Dorsolateral prefrontal cortex (tissue), 120 donors: ENCODE measurements at regions of chr17 and their contacts with region 1.

Region 1: GRCh38 chr17:27670791-27671590 is 40.0 kb downstream of the LGALS9 start:
- DNase-seq: peak in 1 of 10 donors; percentile 10
- H3K4me3 ChIP-seq: no peak overlapping the region
- H3K27ac ChIP-seq: no peak overlapping the region
- H3K27me3 ChIP-seq: no peaks in the 10 kb centered on the region
- CTCF ChIP-seq: no peak

Region 2: GRCh38 chr17:27601069-27601975 is 69.7 kb before region 1 on chr17:
- intact Hi-C with region 1: no loop called
- DNase-seq: peak; percentile 65 to 90 (median 75)
- H3K4me3 ChIP-seq: no peak overlapping the region
- H3K27ac ChIP-seq: peak overlapping the region in 10 of 59 donors; percentile 7 to 61 (median 31)
- H3K27me3 ChIP-seq: no peaks in the 10 kb centered on the region
- CTCF ChIP-seq: peak; percentile 88 to 99 (median 96)

Region 3: DNA sequence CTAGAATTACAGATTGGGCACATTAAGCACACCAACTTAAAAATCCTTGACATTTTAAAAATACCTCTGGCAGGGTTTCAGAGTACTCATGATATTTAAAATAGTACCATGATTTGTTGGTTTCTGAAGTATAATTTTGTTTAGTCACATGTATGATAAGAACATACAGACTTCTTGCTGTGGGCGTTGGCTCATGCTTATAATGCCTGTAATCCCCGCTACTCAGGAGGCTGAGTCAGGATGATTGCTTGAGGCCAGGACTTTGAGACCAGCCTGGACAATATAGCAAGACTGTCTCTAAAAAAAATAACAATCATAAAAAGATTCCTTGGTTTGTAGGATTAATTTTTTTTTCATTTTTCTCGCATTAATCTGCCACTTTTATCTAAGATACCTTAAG is 50.8 kb after region 1 on chr17:
- intact Hi-C with region 1: loop called in 1 of 2 experiments (anchors 10 kb)
- DNase-seq: no peak
- H3K4me3 ChIP-seq: no peak overlapping the region
- H3K27ac ChIP-seq: no peak overlapping the region
- H3K27me3 ChIP-seq: peaks cover 0 to 7% (median 0%) of the 10 kb centered on the region in 45 donors
- CTCF ChIP-seq: no peak